GM12878 (cell line): ENCODE measurements at regions of chr1 and their contacts with region 1.

Region 1: DNA sequence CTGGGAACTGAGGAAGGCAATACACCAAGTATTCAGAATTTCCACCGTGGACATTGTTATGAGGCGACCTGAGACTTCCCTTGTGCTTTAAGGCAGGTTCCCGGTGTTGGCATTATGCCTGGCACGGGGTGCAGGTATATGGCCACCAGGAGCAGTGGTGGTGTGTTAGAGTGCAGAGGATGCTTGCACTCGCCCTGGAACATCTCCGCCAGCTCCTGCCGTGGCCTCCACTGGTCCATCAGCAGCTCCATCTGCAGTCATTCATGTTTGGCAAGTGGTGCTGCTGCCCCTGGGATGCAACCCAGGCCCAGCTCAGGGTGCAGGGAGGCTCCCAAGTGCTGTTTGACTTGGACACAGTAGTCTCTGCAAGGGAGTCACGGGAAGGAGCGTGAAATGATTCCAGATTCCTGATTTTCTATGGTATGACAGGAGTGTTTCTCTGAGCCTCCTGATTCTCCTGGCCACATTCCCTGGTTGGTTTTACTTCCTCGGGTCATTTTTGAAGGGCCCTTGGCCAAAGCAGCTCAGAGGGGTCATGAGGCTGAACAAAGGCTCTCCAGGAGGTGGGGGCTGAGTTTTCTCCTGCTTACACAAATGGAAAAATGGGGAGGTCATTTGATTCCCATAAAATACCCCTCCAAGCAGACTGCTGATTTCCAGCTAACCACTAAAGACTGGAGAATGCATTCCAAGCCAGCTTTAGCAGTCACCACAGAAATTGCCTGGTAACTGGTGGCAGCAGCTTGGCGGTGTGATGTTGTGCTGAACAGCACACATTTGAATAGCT is 60.4 kb upstream of the PSEN2 start:
- DNase-seq: no peak
- ATAC-seq: no peak
- H3K4me3 ChIP-seq: no peak overlapping the region
- H3K27ac ChIP-seq: no peak overlapping the region
- H3K4me1 ChIP-seq: no peaks in the 10 kb centered on the region
- H3K27me3 ChIP-seq: no peaks in the 10 kb centered on the region; a peak in 1 of 4 replicates
- CTCF ChIP-seq: no peak
- EP300 ChIP-seq: no peak
- POLR2A ChIP-seq: no peak
- RAD21 ChIP-seq: no peak

Region 2: GRCh38 chr1:226754793-226755533 is 55.0 kb before region 1 on chr1:
- CTCF ChIA-PET with region 1: no interaction called
- POLR2A ChIA-PET with region 1: no interaction called
- RAD21 ChIA-PET with region 1: no interaction called
- SMC1A ChIA-PET with region 1: no interaction called
- in situ Hi-C with region 1: loop called (anchors 5 kb)
- intact Hi-C with region 1: no loop called
- DNase-seq: no peak
- ATAC-seq: no peak
- H3K4me3 ChIP-seq: no peak overlapping the region
- H3K27ac ChIP-seq: no peak overlapping the region
- H3K4me1 ChIP-seq: no peaks in the 10 kb centered on the region
- H3K27me3 ChIP-seq: no peaks in the 10 kb centered on the region
- CTCF ChIP-seq: no peak
- EP300 ChIP-seq: no peak
- POLR2A ChIP-seq: no peak
- RAD21 ChIP-seq: no peak